Activated CD8-positive, alpha-beta T cell treated with anti-CD3 and anti-CD28 coated beads for 36 hours (primary cell): ENCODE measurements at regions of chr11 and their contacts with region 1.

Region 1: DNA sequence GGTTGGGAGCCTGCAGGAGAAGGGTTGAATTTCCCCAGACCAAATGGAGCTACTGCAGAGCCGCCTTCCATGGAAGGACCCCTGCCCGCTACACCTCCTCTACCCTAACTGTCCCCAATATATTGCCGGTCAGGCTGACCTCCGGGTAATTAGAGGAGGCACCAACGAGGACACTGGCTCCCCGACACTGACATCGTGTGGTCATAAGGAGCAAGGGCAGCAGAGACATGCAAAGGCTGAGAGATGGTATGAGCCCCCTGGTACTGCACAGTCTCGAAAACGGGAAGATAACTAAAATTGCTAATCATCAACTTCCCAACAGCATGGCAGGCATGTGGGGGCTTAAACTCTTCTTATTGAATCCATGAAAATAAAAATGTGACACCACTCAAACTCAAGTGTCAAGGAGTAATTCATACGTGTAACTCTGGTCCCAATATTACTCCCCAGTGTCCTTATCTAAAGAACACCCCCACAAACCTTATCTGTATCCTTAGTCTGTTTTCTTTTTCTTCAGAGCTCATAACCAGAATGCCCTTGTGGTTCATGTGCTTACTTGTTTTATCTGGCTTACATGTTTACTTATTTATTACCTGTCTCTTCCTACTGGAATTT is 4.4 kb downstream of the CAVIN3 start:
- DNase-seq: peak; percentile 57
- ATAC-seq: peak; percentile 43
- H3K4me3 Mint-ChIP-seq: no peak overlapping the region
- H3K27ac Mint-ChIP-seq: no peak overlapping the region
- H3K4me1 Mint-ChIP-seq: peaks cover 20% of the 10 kb centered on the region
- H3K27me3 Mint-ChIP-seq: peaks cover 40% of the 10 kb centered on the region
- CTCF ChIP-seq: peak; percentile 76

Region 2: GRCh38 chr11:6022956-6023355 is 293.0 kb before region 1 on chr11:
- CTCF ChIA-PET with region 1: interaction called, 4 read pairs
- POLR2A ChIA-PET with region 1: no interaction called
- intact Hi-C with region 1: loop called (anchors 5 kb)
- DNase-seq: peak; percentile 5
- ATAC-seq: peak; percentile 49
- H3K4me3 Mint-ChIP-seq: no peak overlapping the region
- H3K27ac Mint-ChIP-seq: no peak overlapping the region
- H3K4me1 Mint-ChIP-seq: no peaks in the 10 kb centered on the region
- H3K27me3 Mint-ChIP-seq: peaks cover 27% of the 10 kb centered on the region
- CTCF ChIP-seq: peak; percentile 44

Region 3: DNA sequence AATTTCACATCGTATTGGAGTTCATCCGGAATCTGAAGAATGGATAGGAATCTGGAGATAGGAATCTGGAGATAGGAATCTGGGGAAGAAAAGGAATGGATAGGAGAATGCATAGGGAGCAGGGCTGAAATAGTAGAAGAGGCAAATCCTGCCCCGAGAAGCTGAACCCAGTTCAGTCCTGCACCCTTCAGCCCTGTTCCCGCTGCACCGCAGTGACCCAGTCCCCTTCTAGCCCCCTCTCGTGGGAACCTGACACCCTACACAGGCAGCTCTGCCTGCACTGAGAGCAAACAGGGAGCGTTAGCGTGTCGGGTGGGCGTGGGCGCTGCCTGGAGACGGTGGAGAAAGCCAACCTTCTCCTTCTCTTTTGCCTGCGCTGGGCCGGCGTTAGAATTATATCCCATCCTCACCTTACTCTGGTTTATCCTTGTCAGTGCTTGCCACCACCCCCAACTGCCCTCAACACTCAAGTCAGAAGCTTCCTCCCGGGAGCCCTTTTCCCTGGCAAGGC is 57.3 kb before region 1 on chr11:
- CTCF ChIA-PET with region 1: interaction called, 12 read pairs
- POLR2A ChIA-PET with region 1: no interaction called
- intact Hi-C with region 1: no loop called
- DNase-seq: peak; percentile 23
- ATAC-seq: peak; percentile 32
- H3K4me3 Mint-ChIP-seq: peak overlapping the region; percentile 34
- H3K27ac Mint-ChIP-seq: no peak overlapping the region
- H3K4me1 Mint-ChIP-seq: no peaks in the 10 kb centered on the region
- H3K27me3 Mint-ChIP-seq: peaks cover 10% of the 10 kb centered on the region
- CTCF ChIP-seq: no peak

Region 4: GRCh38 chr11:6298605-6299004 is 17.3 kb before region 1 on chr11:
- CTCF ChIA-PET with region 1: interaction called, 13 read pairs
- POLR2A ChIA-PET with region 1: no interaction called
- intact Hi-C with region 1: no loop called
- DNase-seq: peak; percentile 48
- ATAC-seq: peak; percentile 83
- H3K4me3 Mint-ChIP-seq: no peak overlapping the region
- H3K27ac Mint-ChIP-seq: no peak overlapping the region
- H3K4me1 Mint-ChIP-seq: no peaks in the 10 kb centered on the region
- H3K27me3 Mint-ChIP-seq: peaks cover 7% of the 10 kb centered on the region
- CTCF ChIP-seq: peak; percentile 35

Region 5: GRCh38 chr11:6303661-6304060 is 12.3 kb before region 1 on chr11:
- CTCF ChIA-PET with region 1: interaction called, 21 read pairs
- POLR2A ChIA-PET with region 1: interaction called, 5 read pairs
- intact Hi-C with region 1: no loop called
- DNase-seq: no peak
- ATAC-seq: no peak
- H3K4me3 Mint-ChIP-seq: no peak overlapping the region
- H3K27ac Mint-ChIP-seq: no peak overlapping the region
- H3K4me1 Mint-ChIP-seq: no peaks in the 10 kb centered on the region
- H3K27me3 Mint-ChIP-seq: peaks cover 19% of the 10 kb centered on the region
- CTCF ChIP-seq: no peak

Region 6: DNA sequence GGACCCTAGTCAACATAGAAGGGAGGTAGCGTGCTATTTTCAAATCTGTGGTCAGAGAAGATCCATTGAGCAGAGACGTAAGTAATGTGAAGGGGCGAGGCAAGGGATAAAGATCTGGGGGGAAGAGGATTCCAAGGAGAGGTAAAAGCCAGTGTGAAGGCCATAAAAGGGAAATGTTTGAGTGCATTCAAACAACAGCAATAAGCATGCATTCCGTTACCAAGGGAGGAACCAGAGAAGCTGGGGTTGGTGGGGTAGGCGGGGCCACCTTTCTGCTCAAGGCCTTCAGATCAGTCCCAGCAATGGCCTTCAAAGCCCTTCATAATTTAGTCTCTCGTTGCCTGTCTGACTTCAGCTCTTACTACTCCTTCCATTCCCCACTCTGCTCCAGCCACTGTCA is 55.9 kb after region 1 on chr11:
- CTCF ChIA-PET with region 1: no interaction called
- POLR2A ChIA-PET with region 1: no interaction called
- intact Hi-C with region 1: no loop called
- DNase-seq: no peak
- ATAC-seq: no peak
- H3K4me3 Mint-ChIP-seq: no peak overlapping the region
- H3K27ac Mint-ChIP-seq: no peak overlapping the region
- H3K4me1 Mint-ChIP-seq: peaks cover 4% of the 10 kb centered on the region
- H3K27me3 Mint-ChIP-seq: no peaks in the 10 kb centered on the region
- CTCF ChIP-seq: no peak